CD4-positive, alpha-beta T cell (primary cell): ENCODE measurements at regions of chr18 and their contacts with region 1.

Region 1: DNA sequence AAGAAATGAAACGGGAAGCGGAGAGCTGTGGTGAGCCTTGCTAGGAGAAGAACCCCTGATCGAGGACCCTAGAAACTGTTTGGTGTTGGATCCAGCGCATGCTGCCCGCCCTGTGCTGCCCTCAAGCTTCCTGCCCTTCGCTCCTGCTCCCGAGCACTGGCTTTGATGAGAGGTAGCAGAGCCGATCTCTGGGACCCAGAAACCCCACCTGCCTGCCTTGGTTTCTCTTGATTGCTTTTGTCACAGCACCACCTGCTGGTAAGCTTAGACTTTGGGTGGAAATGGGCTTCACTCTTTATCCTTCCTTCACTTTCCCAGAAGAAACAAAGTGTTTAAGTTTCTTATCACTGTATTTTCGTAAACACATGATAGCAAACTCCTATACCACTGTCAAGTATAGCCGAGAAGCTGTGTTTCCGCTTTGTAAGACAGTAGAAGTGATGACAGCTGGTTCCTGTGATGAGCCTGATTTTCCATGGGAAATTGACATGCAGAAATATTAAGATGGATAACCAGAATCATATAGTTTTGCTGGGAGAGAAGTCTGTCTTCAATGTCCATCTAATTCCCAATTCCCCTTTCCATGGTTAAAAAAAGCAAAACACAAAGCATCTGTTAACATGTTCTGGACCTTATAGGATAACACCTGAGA is 267.4 kb downstream of the PHLPP1 start:
- DNase-seq: peak in 13 of 14 experiments; percentile 27 to 76 (median 37)
- ATAC-seq: peak; percentile 74
- H3K4me3 ChIP-seq: peak overlapping the region; percentile 20
- H3K4me3 Mint-ChIP-seq: peak overlapping the region; percentile 48
- H3K27ac ChIP-seq: no peak overlapping the region
- H3K27ac Mint-ChIP-seq: no peak overlapping the region
- H3K4me1 ChIP-seq: peaks cover 6% of the 10 kb centered on the region
- H3K4me1 Mint-ChIP-seq: no peaks in the 10 kb centered on the region
- H3K27me3 ChIP-seq: no peaks in the 10 kb centered on the region
- H3K27me3 Mint-ChIP-seq: no peaks in the 10 kb centered on the region
- CTCF ChIP-seq: peak; percentile 75

Region 2: DNA sequence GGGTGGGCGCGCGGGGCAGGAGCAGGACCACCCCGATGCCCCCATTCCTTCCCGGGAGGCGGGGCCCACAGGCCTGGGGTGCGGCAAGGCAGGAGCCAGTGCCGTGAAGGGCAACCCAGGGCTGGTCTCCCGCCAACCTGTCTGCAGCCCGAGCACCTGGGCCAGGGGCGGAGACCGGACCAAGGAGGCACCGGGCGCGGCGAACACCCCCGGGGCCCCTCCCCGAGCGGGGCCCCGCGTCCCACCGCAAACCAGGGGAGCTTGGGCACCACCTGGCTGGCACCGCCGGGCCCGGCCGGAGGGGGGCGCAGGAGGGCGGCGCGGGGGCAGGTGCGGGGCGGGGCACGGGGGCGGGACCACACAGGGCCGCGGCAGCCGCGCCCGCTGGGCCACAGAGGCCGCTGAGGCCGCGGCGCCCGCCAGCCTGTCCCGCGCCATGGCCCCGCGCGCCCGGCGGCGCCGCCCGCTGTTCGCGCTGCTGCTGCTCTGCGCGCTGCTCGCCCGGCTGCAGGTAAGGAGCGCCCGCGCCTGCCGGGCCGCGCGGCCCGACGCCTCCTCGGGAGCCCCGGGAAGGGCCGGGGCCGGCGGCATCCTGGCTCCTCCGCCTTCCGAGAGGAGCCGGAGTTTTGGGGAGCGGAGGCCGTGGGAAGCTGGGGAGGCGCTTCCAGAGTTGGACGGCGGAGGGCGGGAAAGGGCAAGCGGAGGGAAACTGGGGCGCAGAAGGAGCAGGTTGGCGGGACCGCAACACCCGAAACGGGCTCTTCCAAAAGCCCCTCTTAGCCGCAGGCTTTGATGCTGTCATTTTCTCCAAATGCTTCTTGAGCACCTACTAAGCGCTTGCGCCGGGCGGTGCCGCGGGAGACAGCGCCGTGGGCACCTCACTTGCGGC is 657.6 kb before region 1 on chr18 and contains the start of gene TNFRSF11A:
- CTCF ChIA-PET with region 1: no interaction called
- POLR2A ChIA-PET with region 1: no interaction called
- intact Hi-C with region 1: loop called in 1 of 2 experiments (anchors 5 kb)
- DNase-seq: peak; percentile 30 to 80 (median 56)
- ATAC-seq: peak; percentile 87
- H3K4me3 ChIP-seq: peak within 1 kb of the TSS; percentile 61
- H3K4me3 Mint-ChIP-seq: peak within 1 kb of the TSS; percentile 88
- H3K27ac ChIP-seq: no peak within 1 kb of the TSS
- H3K27ac Mint-ChIP-seq: no peak within 1 kb of the TSS
- H3K4me1 ChIP-seq: peaks cover 35% of the 10 kb centered on the region
- H3K4me1 Mint-ChIP-seq: peaks cover 40% of the 10 kb centered on the region
- H3K27me3 ChIP-seq: peaks cover 36 to 46% of the 10 kb centered on the region in 2 experiments
- H3K27me3 Mint-ChIP-seq: peaks cover 78% of the 10 kb centered on the region
- CTCF ChIP-seq: no peak
- total RNA-seq, gene TNFRSF11A: 1.7 TPM

Region 3: GRCh38 chr18:62425465-62426195 is 557.1 kb before region 1 on chr18:
- CTCF ChIA-PET with region 1: interaction called, 5 read pairs
- POLR2A ChIA-PET with region 1: no interaction called
- intact Hi-C with region 1: loop called in 1 of 2 experiments (anchors 2 kb)
- DNase-seq: peak in 13 of 14 experiments; percentile 5 to 85 (median 31)
- ATAC-seq: peak; percentile 51
- H3K4me3 ChIP-seq: no peak overlapping the region
- H3K4me3 Mint-ChIP-seq: no peak overlapping the region
- H3K27ac ChIP-seq: no peak overlapping the region
- H3K27ac Mint-ChIP-seq: no peak overlapping the region
- H3K4me1 ChIP-seq: peaks cover 12% of the 10 kb centered on the region
- H3K4me1 Mint-ChIP-seq: peaks cover 18% of the 10 kb centered on the region
- H3K27me3 ChIP-seq: no peaks in the 10 kb centered on the region
- H3K27me3 Mint-ChIP-seq: no peaks in the 10 kb centered on the region
- CTCF ChIP-seq: peak; percentile 83

Region 4: GRCh38 chr18:62637807-62638687 is 344.7 kb before region 1 on chr18:
- CTCF ChIA-PET with region 1: interaction called, 6 read pairs
- POLR2A ChIA-PET with region 1: no interaction called
- intact Hi-C with region 1: loop called in 1 of 2 experiments (anchors 5 kb)
- DNase-seq: peak; percentile 11 to 69 (median 28)
- ATAC-seq: no peak
- H3K4me3 ChIP-seq: no peak overlapping the region
- H3K4me3 Mint-ChIP-seq: no peak overlapping the region
- H3K27ac ChIP-seq: no peak overlapping the region
- H3K27ac Mint-ChIP-seq: no peak overlapping the region
- H3K4me1 ChIP-seq: no peaks in the 10 kb centered on the region
- H3K4me1 Mint-ChIP-seq: peaks cover 4% of the 10 kb centered on the region
- H3K27me3 ChIP-seq: peaks cover 4 to 11% of the 10 kb centered on the region in 2 experiments
- H3K27me3 Mint-ChIP-seq: peaks cover 17% of the 10 kb centered on the region
- CTCF ChIP-seq: peak; percentile 46

Region 5: DNA sequence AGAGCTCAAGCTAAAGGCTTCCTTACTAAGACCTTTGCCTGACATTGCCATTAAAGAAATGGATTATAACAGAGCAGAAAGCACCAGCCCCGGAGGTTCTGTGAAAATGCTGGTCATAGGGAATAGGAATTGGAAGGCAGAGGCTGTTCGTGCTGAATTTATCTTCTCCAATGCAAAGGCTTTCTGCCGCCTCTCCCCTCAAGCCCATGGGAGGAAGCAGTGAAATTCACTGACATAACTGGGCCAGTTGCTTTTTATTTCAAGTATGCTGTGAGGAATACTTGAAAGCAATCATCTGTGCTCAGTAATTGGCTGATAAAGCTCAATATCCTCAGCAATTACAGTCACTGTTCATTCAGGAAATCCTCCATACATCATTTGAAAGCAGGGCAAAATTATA is 1251.6 kb after region 1 on chr18:
- CTCF ChIA-PET with region 1: no interaction called
- POLR2A ChIA-PET with region 1: no interaction called
- intact Hi-C with region 1: no loop called
- DNase-seq: no peak
- ATAC-seq: no peak
- H3K4me3 ChIP-seq: no peak overlapping the region
- H3K4me3 Mint-ChIP-seq: no peak overlapping the region
- H3K27ac ChIP-seq: no peak overlapping the region
- H3K27ac Mint-ChIP-seq: no peak overlapping the region
- H3K4me1 ChIP-seq: no peaks in the 10 kb centered on the region
- H3K4me1 Mint-ChIP-seq: no peaks in the 10 kb centered on the region
- H3K27me3 ChIP-seq: no peaks in the 10 kb centered on the region
- H3K27me3 Mint-ChIP-seq: no peaks in the 10 kb centered on the region
- CTCF ChIP-seq: no peak